CD14-positive monocyte (primary cell): ENCODE measurements at regions of chr11 and their contacts with region 1.

Region 1: DNA sequence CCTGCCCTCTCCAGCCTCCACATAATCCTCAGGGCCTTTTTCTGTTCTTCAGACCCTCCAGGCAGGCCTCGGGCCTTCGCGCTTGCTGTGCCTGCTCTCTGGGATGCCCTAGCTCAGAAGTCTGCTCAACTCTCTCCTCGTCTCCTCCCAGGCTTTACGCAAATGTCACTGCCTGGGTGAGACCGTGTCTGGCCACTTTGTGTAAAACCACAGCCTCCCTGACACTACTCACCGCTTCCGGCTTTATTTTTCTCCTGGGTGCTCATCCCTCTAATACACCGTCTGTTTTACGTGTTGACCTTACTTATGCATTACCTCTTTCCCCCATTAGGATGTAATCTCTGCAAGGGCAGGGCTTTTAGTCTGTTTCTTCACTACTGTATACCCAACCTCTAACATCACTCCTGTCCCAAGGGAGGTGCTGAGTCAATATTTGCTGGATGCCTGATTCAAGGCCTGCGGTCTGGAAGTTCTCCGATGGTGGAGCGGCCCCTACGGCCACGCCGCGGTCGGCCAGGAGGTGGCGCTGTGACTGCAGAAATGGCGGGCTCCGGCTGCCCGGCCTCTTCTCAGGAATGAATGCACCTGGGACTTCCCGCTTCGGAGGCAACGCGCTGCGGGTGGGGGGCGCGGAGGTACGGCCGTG is 58.2 kb upstream of the THY1 start:
- DNase-seq: peak; percentile 62 to 80 (median 65)
- H3K4me3 ChIP-seq: no peak overlapping the region
- H3K4me3 Mint-ChIP-seq: no peak overlapping the region
- H3K27ac ChIP-seq: no peak overlapping the region
- H3K27ac Mint-ChIP-seq: no peak overlapping the region
- H3K4me1 ChIP-seq: peaks cover 0 to 2% of the 10 kb centered on the region in 2 donors
- H3K4me1 Mint-ChIP-seq: peaks cover 2% of the 10 kb centered on the region
- H3K27me3 ChIP-seq: no peaks in the 10 kb centered on the region
- H3K27me3 Mint-ChIP-seq: peaks cover 6 to 14% (median 9%) of the 10 kb centered on the region in 3 donors
- CTCF ChIP-seq: peak; percentile 96

Region 2: GRCh38 chr11:119624102-119624615 is 143.0 kb after region 1 on chr11:
- intact Hi-C with region 1: loop called in 1 of 2 experiments (anchors 10 kb)
- DNase-seq: no peak
- H3K4me3 ChIP-seq: no peak overlapping the region
- H3K4me3 Mint-ChIP-seq: no peak overlapping the region
- H3K27ac ChIP-seq: no peak overlapping the region
- H3K27ac Mint-ChIP-seq: no peak overlapping the region
- H3K4me1 ChIP-seq: peaks cover 14 to 15% of the 10 kb centered on the region in 2 donors
- H3K4me1 Mint-ChIP-seq: peaks cover 21% of the 10 kb centered on the region
- H3K27me3 ChIP-seq: no peaks in the 10 kb centered on the region
- H3K27me3 Mint-ChIP-seq: peaks cover 2 to 9% (median 4%) of the 10 kb centered on the region in 3 donors
- CTCF ChIP-seq: peak; percentile 84

Region 3: DNA sequence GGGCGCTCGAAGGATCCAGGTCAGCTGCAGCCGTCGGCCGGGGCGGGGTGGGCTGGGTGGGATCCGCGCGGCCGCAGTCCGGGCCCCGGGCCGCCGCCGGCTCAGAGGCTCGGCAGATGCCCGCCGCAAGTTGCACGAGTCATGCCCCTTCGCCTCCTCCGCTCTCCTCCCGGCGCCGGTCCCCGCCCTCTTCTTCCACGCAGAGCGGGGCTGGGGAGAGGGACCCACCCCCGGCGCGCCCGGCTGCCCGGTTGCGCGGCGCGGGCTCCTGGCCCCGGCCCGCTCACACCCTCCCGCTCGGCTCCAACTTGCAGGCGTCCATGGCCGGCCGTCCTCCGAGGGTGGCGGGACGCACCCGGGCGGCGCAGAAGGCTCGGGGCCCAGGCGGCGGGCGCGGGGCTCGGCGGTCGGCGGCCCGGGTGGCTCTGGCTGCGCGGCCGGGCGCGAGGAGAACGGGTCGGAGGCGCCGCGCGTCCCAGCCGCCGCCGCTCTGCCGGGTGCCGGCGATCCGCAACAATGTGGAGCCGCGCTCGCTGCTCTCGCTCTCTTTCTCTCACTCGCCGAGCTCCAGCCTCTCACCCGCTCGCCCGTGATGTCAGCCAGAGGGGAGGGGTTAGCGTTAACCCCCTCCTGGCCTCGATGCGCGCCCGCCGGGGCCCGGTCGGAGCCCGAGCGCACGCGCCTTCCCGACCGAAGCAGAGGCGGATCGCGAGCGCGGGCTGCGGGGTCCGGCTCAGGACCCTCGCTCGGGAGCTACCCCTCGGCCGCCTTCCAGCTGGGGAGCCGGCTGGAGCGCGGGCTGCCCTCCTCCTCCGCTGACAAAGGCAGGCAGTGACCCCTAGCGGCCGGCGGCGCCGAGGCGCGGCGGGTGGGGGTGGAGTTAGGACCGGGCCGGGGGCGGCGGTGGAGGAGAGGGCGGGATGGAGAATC is 247.8 kb after region 1 on chr11 and contains the start of gene NECTIN1:
- intact Hi-C with region 1: loop called (anchors 5 to 10 kb)
- DNase-seq: peak; percentile 69
- H3K4me3 ChIP-seq: peak within 1 kb of the TSS; percentile 55 to 88 (median 62)
- H3K4me3 Mint-ChIP-seq: peak within 1 kb of the TSS; percentile 94 to 98
- H3K27ac ChIP-seq: peak within 1 kb of the TSS in 1 of 2 donors; percentile 75
- H3K27ac Mint-ChIP-seq: peak within 1 kb of the TSS in 5 of 7 donors; percentile 24 to 89 (median 81)
- H3K4me1 ChIP-seq: peaks cover 32 to 35% of the 10 kb centered on the region in 2 donors
- H3K4me1 Mint-ChIP-seq: peaks cover 34% of the 10 kb centered on the region
- H3K27me3 ChIP-seq: peaks cover 0 to 17% of the 10 kb centered on the region in 2 donors
- H3K27me3 Mint-ChIP-seq: peaks cover 12 to 35% (median 20%) of the 10 kb centered on the region in 3 donors
- CTCF ChIP-seq: peak; percentile 99
- polyA plus RNA-seq, gene NECTIN1: 0.53 to 8.3 (median 0.85) TPM